Activated CD4-positive, alpha-beta memory T cell treated with anti-CD3 and anti-CD28 coated beads for 36 hours (primary cell): ENCODE measurements at regions of chr2 and their contacts with region 1.

Region 1: GRCh38 chr2:102063941-102064678 is 72.3 kb downstream of the IL1R2 start:
- DNase-seq: peak; percentile 81
- H3K4me3 Mint-ChIP-seq: no peak overlapping the region
- H3K27ac Mint-ChIP-seq: peak overlapping the region; percentile 88
- H3K4me1 Mint-ChIP-seq: peaks cover 44% of the 10 kb centered on the region
- H3K27me3 Mint-ChIP-seq: peaks cover 6% of the 10 kb centered on the region

Region 2: GRCh38 chr2:101961296-101962191 is 102.6 kb before region 1 on chr2:
- CTCF ChIA-PET with region 1: no interaction called
- POLR2A ChIA-PET with region 1: no interaction called
- intact Hi-C with region 1: no loop called
- DNase-seq: no peak
- H3K4me3 Mint-ChIP-seq: no peak overlapping the region
- H3K27ac Mint-ChIP-seq: no peak overlapping the region
- H3K4me1 Mint-ChIP-seq: peaks cover 4% of the 10 kb centered on the region
- H3K27me3 Mint-ChIP-seq: no peaks in the 10 kb centered on the region

Region 3: DNA sequence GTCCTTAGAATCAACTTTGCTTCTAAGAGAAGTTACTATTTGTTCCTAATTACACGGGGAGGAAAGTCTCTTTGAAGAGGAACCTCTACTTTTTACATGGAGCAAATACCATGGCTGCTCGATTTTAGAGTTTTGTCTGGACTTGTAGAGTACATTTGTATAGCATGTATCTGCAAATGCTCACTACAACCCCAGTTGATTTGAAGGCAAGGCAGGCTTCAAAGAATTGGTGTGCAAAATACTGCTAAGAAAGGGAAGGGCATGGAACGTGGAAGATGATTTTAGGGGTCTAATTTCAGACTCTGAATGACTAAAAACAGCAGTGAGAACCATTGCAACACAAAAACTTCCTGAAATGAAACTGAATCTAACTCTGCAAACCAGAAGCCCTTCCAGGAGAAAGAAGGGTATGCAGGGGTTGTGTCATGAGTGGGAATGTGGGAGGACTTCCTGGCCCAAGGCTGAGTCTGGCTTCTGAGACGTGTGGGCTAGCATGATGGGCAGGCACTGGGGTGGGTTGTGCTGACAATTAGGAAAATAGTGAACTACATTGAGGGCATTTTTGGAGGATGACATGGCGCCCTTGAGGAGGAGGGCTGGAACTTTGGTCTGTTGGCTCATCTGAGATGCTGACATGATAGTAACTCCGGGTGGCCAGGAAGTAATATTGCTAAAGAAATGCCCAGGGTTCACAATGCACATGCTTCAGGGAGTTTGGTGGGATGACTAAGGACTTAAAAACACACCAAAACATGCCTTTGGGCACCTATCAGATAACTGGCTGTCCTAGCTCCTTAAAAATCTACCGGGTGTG is 91.3 kb before region 1 on chr2:
- CTCF ChIA-PET with region 1: no interaction called
- POLR2A ChIA-PET with region 1: no interaction called
- intact Hi-C with region 1: no loop called
- DNase-seq: peak; percentile 12
- H3K4me3 Mint-ChIP-seq: no peak overlapping the region
- H3K27ac Mint-ChIP-seq: no peak overlapping the region
- H3K4me1 Mint-ChIP-seq: peaks cover 10% of the 10 kb centered on the region
- H3K27me3 Mint-ChIP-seq: no peaks in the 10 kb centered on the region

Region 4: GRCh38 chr2:102005989-102006885 is 57.9 kb before region 1 on chr2:
- CTCF ChIA-PET with region 1: interaction called, 12 read pairs
- POLR2A ChIA-PET with region 1: interaction called, 9 read pairs
- intact Hi-C with region 1: loop called (anchors 1 kb)
- DNase-seq: peak; percentile 51
- H3K4me3 Mint-ChIP-seq: peak overlapping the region; percentile 33
- H3K27ac Mint-ChIP-seq: no peak overlapping the region
- H3K4me1 Mint-ChIP-seq: peaks cover 21% of the 10 kb centered on the region
- H3K27me3 Mint-ChIP-seq: peaks cover 1% of the 10 kb centered on the region

Region 5: GRCh38 chr2:102103992-102104871 is 40.1 kb after region 1 on chr2:
- CTCF ChIA-PET with region 1: interaction called, 5 read pairs
- POLR2A ChIA-PET with region 1: interaction called, 21 read pairs
- intact Hi-C with region 1: loop called (anchors 1 kb)
- DNase-seq: peak; percentile 92
- H3K4me3 Mint-ChIP-seq: peak overlapping the region; percentile 81
- H3K27ac Mint-ChIP-seq: peak overlapping the region; percentile 86
- H3K4me1 Mint-ChIP-seq: peaks cover 50% of the 10 kb centered on the region
- H3K27me3 Mint-ChIP-seq: peaks cover 12% of the 10 kb centered on the region

Region 6: DNA sequence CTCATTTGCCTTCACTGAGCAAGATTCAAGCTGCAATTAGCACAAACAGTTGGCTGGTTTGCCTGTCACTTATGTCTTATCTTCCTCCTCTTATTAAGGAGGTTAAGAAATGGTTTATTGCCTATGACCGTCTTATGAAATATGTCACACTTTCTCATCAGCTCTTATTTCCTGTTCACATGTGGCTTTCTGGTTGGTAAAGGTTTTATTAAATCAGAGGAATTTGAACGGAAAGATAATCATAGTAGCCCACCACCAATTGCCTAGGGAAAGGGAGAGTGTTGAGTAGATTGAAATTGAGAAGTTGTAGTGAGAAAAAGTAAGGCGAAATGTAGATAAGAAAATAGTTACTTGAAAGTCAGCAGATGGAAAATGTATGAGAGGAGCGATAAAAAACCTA is 74.2 kb after region 1 on chr2:
- CTCF ChIA-PET with region 1: interaction called, 3 read pairs
- POLR2A ChIA-PET with region 1: interaction called, 7 read pairs
- intact Hi-C with region 1: loop called (anchors 1 kb)
- DNase-seq: no peak
- H3K4me3 Mint-ChIP-seq: no peak overlapping the region
- H3K27ac Mint-ChIP-seq: peak overlapping the region; percentile 70
- H3K4me1 Mint-ChIP-seq: peaks cover 59% of the 10 kb centered on the region
- H3K27me3 Mint-ChIP-seq: peaks cover 24% of the 10 kb centered on the region

Region 7: DNA sequence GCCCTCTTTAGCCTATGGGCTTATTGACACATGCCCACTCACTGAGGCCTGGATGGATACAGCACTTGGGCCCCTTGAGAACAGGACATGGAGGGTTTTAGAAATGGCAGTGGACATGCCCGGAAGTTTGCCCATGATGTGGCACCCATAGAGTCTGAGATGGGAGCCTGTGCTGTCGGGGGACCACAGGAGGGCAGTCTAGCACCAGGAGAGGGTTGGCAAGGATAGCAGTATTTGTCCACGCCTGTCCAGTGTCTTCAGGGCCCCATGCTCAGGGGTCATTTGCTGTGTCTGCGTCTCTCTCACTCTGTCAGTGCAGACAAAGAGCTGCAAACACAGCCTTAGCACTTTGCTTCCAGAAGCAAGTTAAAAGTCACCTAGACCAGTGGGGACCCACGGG is 171.4 kb after region 1 on chr2:
- CTCF ChIA-PET with region 1: interaction called, 23 read pairs
- POLR2A ChIA-PET with region 1: no interaction called
- intact Hi-C with region 1: loop called (anchors 2 kb)
- DNase-seq: peak; percentile 56
- H3K4me3 Mint-ChIP-seq: no peak overlapping the region
- H3K27ac Mint-ChIP-seq: peak overlapping the region; percentile 61
- H3K4me1 Mint-ChIP-seq: peaks cover 58% of the 10 kb centered on the region
- H3K27me3 Mint-ChIP-seq: peaks cover 2% of the 10 kb centered on the region

Region 8: GRCh38 chr2:102304268-102304667 is 240.2 kb after region 1 on chr2:
- CTCF ChIA-PET with region 1: no interaction called
- POLR2A ChIA-PET with region 1: no interaction called
- intact Hi-C with region 1: no loop called
- DNase-seq: peak; percentile 16
- H3K4me3 Mint-ChIP-seq: no peak overlapping the region
- H3K27ac Mint-ChIP-seq: peak overlapping the region; percentile 89
- H3K4me1 Mint-ChIP-seq: peaks cover 42% of the 10 kb centered on the region
- H3K27me3 Mint-ChIP-seq: peaks cover 4% of the 10 kb centered on the region